PC-9 (cell line): ENCODE measurements at regions of chr12 and their contacts with region 1.

Region 1: GRCh38 chr12:113214938-113215400 is 6.3 kb upstream of the TPCN1 start:
- DNase-seq: peak; percentile 81 to 99
- H3K4me3 ChIP-seq: no peak overlapping the region; the same call in 1 of the 2 replicates
- H3K27ac ChIP-seq: peak overlapping the region; percentile 80
- H3K4me1 ChIP-seq: peaks cover 44% of the 10 kb centered on the region
- H3K27me3 ChIP-seq: no peaks in the 10 kb centered on the region
- CTCF ChIP-seq: peak; percentile 52

Region 2: GRCh38 chr12:113241191-113242025 is 26.4 kb after region 1 on chr12:
- CTCF ChIA-PET with region 1: no interaction called
- POLR2A ChIA-PET with region 1: no interaction called
- intact Hi-C with region 1: loop called (anchors 1 kb)
- DNase-seq: peak; percentile 60 to 99
- H3K4me3 ChIP-seq: peak overlapping the region; percentile 36; the same call in 1 of the 2 replicates
- H3K27ac ChIP-seq: peak overlapping the region; percentile 93
- H3K4me1 ChIP-seq: peaks cover 86% of the 10 kb centered on the region
- H3K27me3 ChIP-seq: no peaks in the 10 kb centered on the region
- CTCF ChIP-seq: no peak